ENCODE measurements at regions of chr3 and their contacts with region 1.

Region 1: GRCh38 chr3:139218046-139218445 is 125.8 kb upstream of the MRPS22 start:
- DNase-seq: no peak
- H3K4me3 ChIP-seq: no peak overlapping the region
- H3K27ac ChIP-seq: peak overlapping the region in 1 of 2 donors; percentile 10
- H3K4me1 ChIP-seq: peaks cover 10% of the 10 kb centered on the region
- H3K27me3 ChIP-seq: no peaks in the 10 kb centered on the region
- CTCF ChIP-seq: no peak
- EP300 ChIP-seq: no peak
- POLR2A ChIP-seq: no peak

Region 2: DNA sequence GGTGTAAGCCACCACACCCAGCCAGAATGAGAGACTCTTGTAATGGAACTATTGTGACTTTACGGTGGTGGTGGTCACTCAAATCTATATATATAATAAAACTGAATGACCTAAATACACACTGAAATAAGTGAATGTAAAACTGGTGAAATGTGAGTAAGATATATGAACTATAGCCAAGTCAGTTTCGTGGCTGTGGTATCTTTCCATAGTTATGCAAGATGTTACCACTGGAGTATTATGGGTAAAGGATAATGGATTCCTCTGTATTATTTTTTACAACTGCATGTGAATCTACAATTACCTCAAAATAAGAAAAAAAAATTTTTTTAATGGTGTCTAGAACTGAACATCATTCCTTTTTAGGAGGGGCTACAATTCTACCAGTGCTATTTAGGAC is 405.2 kb before region 1 on chr3:
- intact Hi-C with region 1: no loop called
- DNase-seq: no peak
- H3K4me3 ChIP-seq: no peak overlapping the region
- H3K27ac ChIP-seq: no peak overlapping the region
- H3K4me1 ChIP-seq: no peaks in the 10 kb centered on the region
- H3K27me3 ChIP-seq: no peaks in the 10 kb centered on the region
- CTCF ChIP-seq: no peak
- EP300 ChIP-seq: no peak
- POLR2A ChIP-seq: no peak

Region 3: DNA sequence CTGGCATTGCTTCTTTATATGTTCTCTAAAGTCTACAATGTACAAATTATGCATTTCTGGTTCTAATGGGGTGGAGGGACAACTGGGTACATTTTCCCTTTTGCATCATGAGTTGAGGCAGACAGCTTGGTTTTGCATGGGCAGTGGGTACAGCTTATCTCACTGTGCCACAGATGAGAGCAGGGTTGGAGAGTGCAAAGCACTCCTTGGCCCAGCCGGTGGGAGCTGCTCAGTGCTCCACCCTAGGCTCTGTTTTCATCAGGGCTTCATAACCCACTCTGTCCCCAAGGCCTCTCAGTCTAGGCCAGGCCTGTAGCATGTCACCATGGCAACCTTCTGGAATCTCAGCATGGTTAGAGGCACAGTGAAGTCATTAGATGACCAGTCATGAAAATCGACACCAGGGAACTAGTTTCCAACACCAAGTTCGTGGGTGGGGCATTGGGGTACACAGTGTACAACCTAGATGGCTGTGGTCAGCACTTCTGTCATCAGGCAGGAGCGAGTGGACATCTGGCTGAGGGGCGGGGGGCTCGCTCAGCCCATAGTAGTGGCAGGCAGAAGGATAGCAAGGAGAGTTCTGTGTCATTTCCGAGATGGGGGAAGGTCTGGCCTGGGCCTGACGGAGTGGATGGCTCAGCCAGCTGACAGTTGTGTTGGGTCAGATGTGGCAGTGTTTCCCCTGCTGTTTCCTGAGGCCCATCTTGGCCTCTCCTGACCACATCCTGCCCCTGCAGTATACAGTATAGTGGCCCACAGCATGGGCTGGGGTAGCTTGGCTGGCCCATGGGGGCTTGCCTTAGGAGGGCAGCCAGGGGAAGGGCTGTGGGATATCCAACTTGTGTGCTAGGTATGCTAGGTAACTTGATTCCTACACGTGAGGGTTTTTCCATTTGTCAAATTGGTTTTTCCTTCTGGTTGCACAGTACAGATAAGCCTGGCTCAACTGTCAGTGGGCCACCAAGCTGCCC is 97.7 kb before region 1 on chr3:
- intact Hi-C with region 1: loop called in 1 of 4 experiments (anchors 10 kb)
- DNase-seq: no peak
- H3K4me3 ChIP-seq: no peak overlapping the region
- H3K27ac ChIP-seq: no peak overlapping the region
- H3K4me1 ChIP-seq: peaks cover 8% of the 10 kb centered on the region
- H3K27me3 ChIP-seq: no peaks in the 10 kb centered on the region
- CTCF ChIP-seq: no peak
- EP300 ChIP-seq: no peak
- POLR2A ChIP-seq: no peak

Region 4: DNA sequence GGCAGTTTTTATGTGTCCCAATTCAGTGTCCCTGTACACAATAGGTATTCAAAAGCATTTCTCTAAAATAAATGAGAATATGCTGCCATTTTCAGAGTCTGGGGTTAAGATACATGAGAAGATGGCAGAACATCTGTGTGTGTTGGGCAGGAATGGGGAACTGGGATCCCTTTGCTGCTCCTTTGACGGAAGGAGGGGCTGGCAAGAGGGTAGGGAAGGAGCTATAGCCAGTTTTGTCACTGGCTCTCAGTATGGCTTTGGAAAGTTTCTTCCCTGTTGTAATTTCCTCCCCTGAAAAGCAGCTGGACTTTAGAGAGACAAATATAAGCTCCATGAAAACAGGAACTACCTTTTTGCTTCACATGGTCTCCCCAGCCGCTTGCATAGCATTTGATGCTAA is 35.9 kb before region 1 on chr3:
- intact Hi-C with region 1: loop called in 1 of 4 experiments (anchors 5 kb)
- DNase-seq: no peak
- H3K4me3 ChIP-seq: no peak overlapping the region
- H3K27ac ChIP-seq: no peak overlapping the region
- H3K4me1 ChIP-seq: peaks cover 19% of the 10 kb centered on the region
- H3K27me3 ChIP-seq: no peaks in the 10 kb centered on the region
- CTCF ChIP-seq: no peak
- EP300 ChIP-seq: no peak
- POLR2A ChIP-seq: no peak